ENCODE measurements at regions of chr6 and their contacts with region 1.

Region 1: DNA sequence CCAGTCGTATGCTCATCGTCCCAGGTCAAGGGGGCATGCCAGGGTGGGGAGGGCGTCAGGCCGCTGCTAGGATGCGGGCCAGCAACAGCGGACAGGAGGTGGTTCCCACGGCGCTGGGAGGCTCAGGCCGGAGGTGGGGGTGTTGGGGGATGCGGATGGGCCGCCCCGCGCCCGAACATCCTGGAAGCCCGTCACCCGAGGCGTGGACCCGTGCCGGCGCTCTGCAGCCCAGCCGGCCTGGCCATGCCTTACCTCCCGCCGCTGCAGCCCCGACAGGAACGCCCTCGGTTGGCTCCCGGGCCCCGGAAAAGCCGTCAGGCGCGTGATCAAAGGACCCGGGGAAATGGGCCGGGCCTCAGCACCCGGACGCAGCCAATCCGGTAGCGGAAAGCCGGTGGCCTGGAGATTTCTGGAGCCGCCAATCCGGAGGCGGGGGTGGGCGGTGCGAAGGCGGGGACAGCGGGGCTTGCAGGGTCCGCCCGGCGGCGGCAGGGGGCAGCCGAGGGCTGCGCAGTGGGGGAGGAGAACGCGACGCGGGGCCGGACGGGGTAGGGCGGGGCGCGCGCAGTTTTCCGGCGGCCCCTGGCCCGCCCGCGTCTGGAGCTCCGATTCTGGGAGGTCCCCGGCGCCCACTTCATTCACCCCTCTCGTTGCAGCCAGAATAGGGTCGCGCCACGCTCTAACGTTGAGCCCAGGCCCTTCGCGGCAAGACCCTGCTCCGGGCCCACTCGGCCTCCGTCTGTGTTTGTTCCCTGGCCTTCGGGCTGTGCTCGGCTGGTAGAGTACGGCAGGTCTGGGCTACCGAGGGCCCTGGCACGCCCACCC is at the start of gene SMIM29:
- DNase-seq: no peak
- H3K4me3 ChIP-seq: peak within 1 kb of the TSS; percentile 79
- H3K27me3 ChIP-seq: no peaks in the 10 kb centered on the region
- CTCF ChIP-seq: peak; percentile 67
- polyA plus RNA-seq, gene SMIM29: 16.3 and 29.5 TPM in 2 replicates

Region 2: GRCh38 chr6:34392497-34393190 is 143.7 kb after region 1 on chr6 and contains the start of gene NUDT3:
- CTCF ChIA-PET with region 1: interaction called, 12 read pairs
- POLR2A ChIA-PET with region 1: no interaction called
- DNase-seq: peak; percentile 66
- H3K4me3 ChIP-seq: peak within 1 kb of the TSS; percentile 74
- H3K27me3 ChIP-seq: no peaks in the 10 kb centered on the region
- CTCF ChIP-seq: peak; percentile 94
- polyA plus RNA-seq, gene NUDT3: 9.6 and 14.9 TPM in 2 replicates

Region 3: GRCh38 chr6:34414999-34415858 is 166.3 kb after region 1 on chr6:
- CTCF ChIA-PET with region 1: interaction called, 16 read pairs
- POLR2A ChIA-PET with region 1: no interaction called
- DNase-seq: no peak
- H3K4me3 ChIP-seq: no peak overlapping the region
- H3K27me3 ChIP-seq: no peaks in the 10 kb centered on the region
- CTCF ChIP-seq: peak; percentile 44

Region 4: GRCh38 chr6:34546551-34547321 is 297.8 kb after region 1 on chr6:
- CTCF ChIA-PET with region 1: no interaction called
- POLR2A ChIA-PET with region 1: interaction called, 11 read pairs
- DNase-seq: no peak
- H3K4me3 ChIP-seq: no peak overlapping the region
- H3K27me3 ChIP-seq: peaks cover 4% of the 10 kb centered on the region; the same call in 1 of the 2 replicates
- CTCF ChIP-seq: no peak

Measured in BJ (cell line).